ENCODE measurements at regions of chr13 and their contacts with region 1.

Region 1: GRCh38 chr13:33537026-33537425 is 251.5 kb upstream of the STARD13 start:
- DNase-seq: no peak
- ATAC-seq: peak; percentile 74

Region 2: GRCh38 chr13:33285420-33286124 is 251.5 kb before region 1 on chr13 and contains the start of gene STARD13:
- intact Hi-C with region 1: loop called in 1 of 2 experiments (anchors 10 kb)
- DNase-seq: peak; percentile 90 to 93
- ATAC-seq: peak; percentile 92
- total RNA-seq, gene STARD13: 28.7 to 32.9 TPM

Region 3: GRCh38 chr13:33409673-33410510 is 127.1 kb before region 1 on chr13:
- intact Hi-C with region 1: no loop called
- DNase-seq: no peak
- ATAC-seq: no peak

Measured in left colon (tissue), 2 donors.